ENCODE measurements at regions of chr7 and their contacts with region 1.

Region 1: GRCh38 chr7:25565949-25566348 is 337.7 kb upstream of the NPVF start:
- DNase-seq: peak; percentile 37
- ATAC-seq: peak; percentile 50
- H3K4me3 Mint-ChIP-seq: no peak overlapping the region
- H3K27ac Mint-ChIP-seq: no peak overlapping the region
- H3K4me1 Mint-ChIP-seq: peaks cover 2% of the 10 kb centered on the region
- H3K27me3 Mint-ChIP-seq: peaks cover 14% of the 10 kb centered on the region
- CTCF ChIP-seq: peak; percentile 100

Region 2: DNA sequence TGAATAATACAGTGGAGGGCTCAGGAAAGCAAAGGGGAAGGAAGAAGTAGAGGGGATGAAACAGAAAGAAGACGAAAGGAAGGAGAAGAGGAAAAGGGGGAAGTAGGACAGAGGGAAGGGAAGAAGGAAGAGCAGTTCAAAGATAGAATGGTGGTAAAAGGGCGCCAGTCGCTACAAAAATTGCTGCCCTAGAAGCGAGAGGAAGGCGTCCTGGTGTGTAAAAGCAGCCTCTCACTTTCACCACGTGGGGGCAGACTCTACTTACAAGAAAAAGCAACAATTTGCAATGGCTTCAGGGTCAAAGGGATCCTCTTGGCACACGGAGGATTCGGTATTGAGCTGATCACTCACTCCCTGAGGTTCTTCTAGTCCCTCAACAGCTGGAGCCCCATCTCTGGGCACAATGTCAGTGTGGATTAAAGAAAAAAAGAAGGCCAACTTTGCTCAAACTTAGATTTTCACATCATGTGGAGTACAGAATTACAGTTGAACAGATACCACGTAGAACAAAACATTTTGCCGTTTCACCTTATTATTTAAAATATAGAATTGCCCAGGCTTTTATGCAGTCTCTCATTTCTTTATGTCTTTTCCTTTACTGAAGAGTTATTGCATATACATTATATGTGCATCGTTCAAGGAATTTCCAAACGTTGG is 306.2 kb before region 1 on chr7:
- CTCF ChIA-PET with region 1: interaction called, 112 read pairs
- POLR2A ChIA-PET with region 1: no interaction called
- intact Hi-C with region 1: loop called (anchors 1 kb)
- DNase-seq: no peak
- ATAC-seq: peak; percentile 64
- H3K4me3 Mint-ChIP-seq: no peak overlapping the region
- H3K27ac Mint-ChIP-seq: no peak overlapping the region
- H3K4me1 Mint-ChIP-seq: peaks cover 9% of the 10 kb centered on the region
- H3K27me3 Mint-ChIP-seq: peaks cover 37% of the 10 kb centered on the region
- CTCF ChIP-seq: peak; percentile 62

Region 3: DNA sequence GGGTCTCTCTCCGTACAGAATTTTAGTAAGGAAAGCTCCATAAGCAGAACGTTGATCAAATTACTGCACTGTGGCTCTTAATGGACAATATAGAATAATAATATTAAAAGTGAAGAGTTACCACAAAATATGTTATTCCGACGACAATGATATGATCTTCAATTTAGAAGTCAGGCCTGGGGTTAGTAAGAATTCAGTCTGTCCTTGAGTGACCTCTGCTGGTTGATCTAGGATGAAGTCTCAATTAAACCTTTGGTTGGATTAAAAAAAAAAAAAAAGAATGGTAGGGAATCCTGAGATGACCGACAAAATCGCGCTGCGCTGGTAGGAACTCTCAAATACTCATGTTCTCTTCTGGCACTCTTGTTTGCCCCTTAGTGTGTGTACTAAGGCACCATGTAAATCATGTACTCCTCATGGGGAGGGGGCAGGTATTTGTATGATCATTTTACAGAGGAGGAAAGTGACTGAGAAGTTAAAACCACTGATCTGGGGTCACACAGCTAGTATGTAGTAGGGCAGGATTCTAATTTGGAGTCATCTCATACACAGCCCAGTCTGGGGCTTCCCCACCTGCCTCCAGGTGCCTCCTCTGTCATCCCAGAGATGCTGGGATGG is 176.4 kb before region 1 on chr7:
- CTCF ChIA-PET with region 1: interaction called, 75 read pairs
- POLR2A ChIA-PET with region 1: no interaction called
- intact Hi-C with region 1: loop called (anchors 1 kb)
- DNase-seq: no peak
- ATAC-seq: no peak
- H3K4me3 Mint-ChIP-seq: no peak overlapping the region
- H3K27ac Mint-ChIP-seq: no peak overlapping the region
- H3K4me1 Mint-ChIP-seq: no peaks in the 10 kb centered on the region
- H3K27me3 Mint-ChIP-seq: peaks cover 21% of the 10 kb centered on the region
- CTCF ChIP-seq: no peak

Region 4: DNA sequence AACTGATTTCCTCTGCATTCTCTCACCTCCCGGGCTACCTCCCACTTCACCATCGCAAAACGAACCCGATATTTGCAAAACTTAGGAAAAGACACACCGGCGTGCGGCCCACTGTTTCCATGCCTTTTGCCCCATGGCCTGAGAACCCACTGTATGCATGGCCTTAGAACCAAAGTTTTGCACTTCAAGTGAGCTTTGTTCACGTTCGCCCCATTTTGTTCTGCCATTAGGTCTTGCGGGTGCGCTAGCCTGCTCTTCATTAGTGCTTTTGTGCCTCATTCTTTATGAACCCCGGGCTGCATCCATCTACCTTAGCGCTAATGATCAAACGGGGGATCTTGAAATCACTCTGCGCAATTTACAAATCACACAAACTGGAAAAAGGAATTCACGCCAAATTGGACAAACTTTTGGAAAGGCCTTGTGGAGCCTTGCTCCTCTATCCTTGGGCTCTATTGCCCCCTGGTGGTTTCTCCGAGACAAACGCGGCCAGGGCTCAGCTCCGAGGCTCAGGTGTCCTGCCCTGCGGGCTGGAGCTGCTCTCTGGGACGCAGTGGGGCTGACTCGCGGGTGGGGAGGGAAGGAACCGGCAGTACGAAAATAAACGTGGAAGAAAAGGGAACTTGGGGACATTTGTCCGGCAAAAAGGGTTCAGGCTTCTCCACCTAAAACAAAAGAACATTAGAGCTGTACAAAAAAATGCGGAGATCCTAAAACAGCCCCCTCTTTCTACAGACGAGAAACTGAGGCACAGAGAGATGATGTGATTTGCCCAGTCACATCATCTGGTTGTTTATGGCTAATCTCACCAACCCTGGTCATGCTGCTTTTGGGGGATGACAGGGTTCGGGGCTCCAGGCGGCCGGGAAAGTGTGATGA is 285.6 kb after region 1 on chr7:
- CTCF ChIA-PET with region 1: interaction called, 3 read pairs
- POLR2A ChIA-PET with region 1: no interaction called
- intact Hi-C with region 1: loop called (anchors 1 kb)
- DNase-seq: no peak
- ATAC-seq: peak; percentile 64
- H3K4me3 Mint-ChIP-seq: peak overlapping the region; percentile 70
- H3K27ac Mint-ChIP-seq: peak overlapping the region; percentile 76
- H3K4me1 Mint-ChIP-seq: peaks cover 12% of the 10 kb centered on the region
- H3K27me3 Mint-ChIP-seq: peaks cover 50% of the 10 kb centered on the region
- CTCF ChIP-seq: no peak